Esophagus muscularis mucosa (tissue), 4 donors: ENCODE measurements at regions of chr1 and their contacts with region 1.

Region 1: DNA sequence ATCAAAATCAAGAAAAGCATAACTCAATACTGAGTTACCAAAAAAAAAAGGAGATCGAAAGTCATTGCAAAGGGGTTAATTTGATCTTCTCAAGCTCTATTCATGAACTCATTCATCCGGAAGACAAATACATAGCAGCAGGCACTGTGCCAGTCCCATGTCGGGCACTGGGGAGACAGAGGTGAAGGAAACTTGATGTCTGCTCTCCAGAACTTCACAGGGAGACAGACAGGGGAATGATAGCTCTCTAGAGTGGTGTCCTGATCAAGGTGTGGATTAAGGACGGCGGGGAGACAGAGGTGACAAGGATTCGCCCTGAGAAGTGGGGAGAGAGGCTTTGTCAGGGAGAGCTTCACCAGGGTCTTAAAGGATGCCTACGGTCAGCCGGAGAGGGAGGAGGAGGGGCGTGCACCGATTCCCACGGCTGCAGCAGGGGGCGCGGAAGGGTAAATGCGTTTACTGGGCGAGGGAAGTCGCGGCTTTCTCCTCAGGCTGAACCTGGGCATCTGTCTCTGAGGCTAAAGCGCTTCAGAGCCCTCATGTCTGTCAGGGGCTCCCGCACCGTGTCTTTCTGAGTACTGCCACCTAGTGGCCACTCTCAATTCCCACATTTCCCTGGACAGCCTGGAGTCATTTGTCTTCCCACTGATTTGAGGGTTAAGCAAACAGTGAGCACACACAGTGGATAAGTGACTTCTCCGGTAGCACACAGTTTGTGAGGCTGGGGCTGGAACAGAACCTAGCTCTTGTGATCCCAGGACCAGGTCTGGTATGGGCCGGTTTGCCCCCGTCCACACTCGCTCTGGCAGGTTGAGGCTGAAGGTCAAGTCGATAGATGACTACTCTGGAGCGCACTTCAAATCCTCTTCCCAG is 152.8 kb downstream of the TENT5C start:
- DNase-seq: no peak
- H3K4me3 ChIP-seq: peak overlapping the region; percentile 47 to 58 (median 52)
- H3K27ac ChIP-seq: no peak overlapping the region
- H3K4me1 ChIP-seq: peaks cover 10 to 18% (median 17%) of the 10 kb centered on the region in 4 donors
- H3K27me3 ChIP-seq: no peaks in the 10 kb centered on the region
- CTCF ChIP-seq: peak; percentile 79 to 92 (median 86)
- EP300 ChIP-seq: no peak
- POLR2A ChIP-seq: no peak

Region 2: GRCh38 chr1:117512743-117513321 is 245.8 kb before region 1 on chr1:
- intact Hi-C with region 1: loop called (anchors 5 kb)
- DNase-seq: no peak
- H3K4me3 ChIP-seq: no peak overlapping the region
- H3K27ac ChIP-seq: no peak overlapping the region
- H3K4me1 ChIP-seq: no peaks in the 10 kb centered on the region
- H3K27me3 ChIP-seq: no peaks in the 10 kb centered on the region
- CTCF ChIP-seq: peak; percentile 43 to 56 (median 54)
- EP300 ChIP-seq: no peak
- POLR2A ChIP-seq: no peak

Region 3: DNA sequence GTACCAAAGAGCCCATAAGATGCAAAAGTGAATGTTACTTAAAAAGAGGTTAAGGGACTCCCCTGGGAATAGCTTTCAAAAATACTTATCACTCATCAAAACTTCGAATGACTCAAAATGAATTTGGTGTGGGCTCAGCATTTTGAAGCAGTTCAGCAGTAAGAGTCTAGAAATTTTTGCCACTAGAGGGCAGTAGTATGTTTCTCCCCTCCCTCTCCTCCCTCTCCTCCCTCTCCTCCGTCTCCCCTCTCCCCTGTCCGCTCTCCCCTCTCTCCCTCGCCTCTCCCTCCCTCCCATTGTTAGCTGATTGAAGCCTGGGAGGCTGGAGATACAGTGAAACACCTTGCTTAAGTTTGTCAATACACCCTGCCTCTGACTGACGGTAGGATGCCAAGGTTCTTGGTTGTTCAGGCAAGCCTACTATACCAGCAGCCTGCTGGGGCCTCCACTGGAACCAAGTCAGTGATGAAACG is 223.6 kb before region 1 on chr1:
- intact Hi-C with region 1: loop called (anchors 5 kb)
- DNase-seq: no peak
- H3K4me3 ChIP-seq: no peak overlapping the region
- H3K27ac ChIP-seq: no peak overlapping the region
- H3K4me1 ChIP-seq: peaks cover 0 to 8% (median 5%) of the 10 kb centered on the region in 4 donors
- H3K27me3 ChIP-seq: no peaks in the 10 kb centered on the region
- CTCF ChIP-seq: peak; percentile 45 to 73 (median 61)
- EP300 ChIP-seq: no peak
- POLR2A ChIP-seq: no peak

Region 4: GRCh38 chr1:117605774-117606648 is 152.7 kb before region 1 on chr1 and contains the start of gene TENT5C:
- intact Hi-C with region 1: loop called (anchors 5 kb)
- DNase-seq: peak; percentile 99
- H3K4me3 ChIP-seq: peak within 1 kb of the TSS; percentile 69 to 91 (median 87)
- H3K27ac ChIP-seq: peak within 1 kb of the TSS; percentile 79 to 93 (median 84)
- H3K4me1 ChIP-seq: peaks cover 9 to 49% (median 42%) of the 10 kb centered on the region in 4 donors
- H3K27me3 ChIP-seq: no peaks in the 10 kb centered on the region
- CTCF ChIP-seq: peak in 2 of 3 experiments; percentile 6 to 7
- EP300 ChIP-seq: no peak
- POLR2A ChIP-seq: peak; percentile 78
- total RNA-seq, gene TENT5C: 0.92 to 6.8 (median 2.5) TPM

Region 5: DNA sequence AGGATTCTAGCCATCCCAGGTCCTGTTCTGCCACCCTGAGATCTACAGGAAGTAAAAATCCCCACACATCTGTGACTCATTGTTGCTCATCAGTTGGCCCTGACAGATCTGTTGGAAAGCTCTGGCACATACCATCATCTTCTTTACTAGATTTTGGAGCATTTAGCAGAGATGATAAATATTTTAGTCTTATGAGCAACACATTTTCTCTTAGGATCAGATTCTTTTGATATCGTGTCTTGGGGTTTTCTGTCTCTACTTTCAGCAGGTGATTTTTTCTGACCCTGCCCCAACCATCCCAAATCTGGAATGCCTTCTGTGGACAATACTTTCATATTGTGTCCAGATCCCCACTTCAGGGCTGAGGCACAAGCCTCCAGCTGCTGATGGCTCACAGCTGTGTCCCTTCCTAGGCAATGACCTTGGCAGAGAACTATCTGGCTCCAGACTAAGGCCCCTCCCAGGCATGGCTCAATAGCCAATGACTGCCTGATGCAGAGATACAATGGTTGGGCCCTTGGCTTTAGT is 67.9 kb after region 1 on chr1:
- intact Hi-C with region 1: no loop called
- DNase-seq: no peak
- H3K4me3 ChIP-seq: no peak overlapping the region
- H3K27ac ChIP-seq: peak overlapping the region; percentile 48 to 73 (median 72)
- H3K4me1 ChIP-seq: peaks cover 33 to 70% (median 66%) of the 10 kb centered on the region in 4 donors
- H3K27me3 ChIP-seq: no peaks in the 10 kb centered on the region
- CTCF ChIP-seq: no peak
- EP300 ChIP-seq: no peak
- POLR2A ChIP-seq: no peak

Region 6: GRCh38 chr1:117895482-117896114 is 136.9 kb after region 1 on chr1:
- intact Hi-C with region 1: loop called (anchors 5 kb)
- DNase-seq: no peak
- H3K4me3 ChIP-seq: no peak overlapping the region
- H3K27ac ChIP-seq: no peak overlapping the region
- H3K4me1 ChIP-seq: no peaks in the 10 kb centered on the region
- H3K27me3 ChIP-seq: no peaks in the 10 kb centered on the region
- CTCF ChIP-seq: peak; percentile 64 to 73 (median 66)
- EP300 ChIP-seq: no peak
- POLR2A ChIP-seq: no peak